HEK293T (cell line): ENCODE measurements at regions of chr16 and their contacts with region 1.

Region 1: DNA sequence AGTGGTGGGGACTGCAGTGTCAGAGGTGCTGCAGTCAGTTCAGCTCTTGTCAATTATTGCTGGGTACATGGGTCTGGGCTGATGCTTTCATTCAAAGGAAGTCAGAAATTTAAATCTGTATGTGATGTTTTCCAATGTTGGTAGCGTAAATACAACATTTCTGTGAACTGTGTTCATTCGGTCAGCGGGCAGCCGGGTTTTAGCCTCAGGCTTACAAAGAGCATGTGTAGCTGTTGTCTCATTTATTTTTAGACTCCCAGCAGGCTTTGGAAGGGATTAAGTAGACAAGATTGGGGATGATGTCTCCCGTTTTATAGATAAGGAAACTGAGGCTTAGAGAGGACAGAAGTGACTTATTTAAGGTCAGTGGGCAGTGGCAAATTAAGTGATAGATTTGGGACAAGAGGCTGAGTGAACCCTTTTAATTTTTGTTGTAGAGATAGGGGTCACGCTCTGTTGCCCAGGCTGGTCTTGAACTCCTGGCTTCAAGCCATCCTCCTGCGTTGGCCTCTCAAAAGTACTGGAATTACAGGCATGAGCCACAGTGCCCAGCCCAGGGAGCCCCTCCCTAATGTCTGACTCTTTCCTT is 8.1 kb downstream of the AQP8 start:
- DNase-seq: no peak

Region 2: GRCh38 chr16:25066747-25067631 is 157.8 kb before region 1 on chr16:
- CTCF ChIA-PET with region 1: no interaction called
- POLR2A ChIA-PET with region 1: no interaction called
- DNase-seq: peak; percentile 93

Region 3: GRCh38 chr16:25126820-25127232 is 98.0 kb before region 1 on chr16:
- CTCF ChIA-PET with region 1: interaction called, 12 read pairs
- POLR2A ChIA-PET with region 1: no interaction called
- DNase-seq: peak; percentile 41

Region 4: DNA sequence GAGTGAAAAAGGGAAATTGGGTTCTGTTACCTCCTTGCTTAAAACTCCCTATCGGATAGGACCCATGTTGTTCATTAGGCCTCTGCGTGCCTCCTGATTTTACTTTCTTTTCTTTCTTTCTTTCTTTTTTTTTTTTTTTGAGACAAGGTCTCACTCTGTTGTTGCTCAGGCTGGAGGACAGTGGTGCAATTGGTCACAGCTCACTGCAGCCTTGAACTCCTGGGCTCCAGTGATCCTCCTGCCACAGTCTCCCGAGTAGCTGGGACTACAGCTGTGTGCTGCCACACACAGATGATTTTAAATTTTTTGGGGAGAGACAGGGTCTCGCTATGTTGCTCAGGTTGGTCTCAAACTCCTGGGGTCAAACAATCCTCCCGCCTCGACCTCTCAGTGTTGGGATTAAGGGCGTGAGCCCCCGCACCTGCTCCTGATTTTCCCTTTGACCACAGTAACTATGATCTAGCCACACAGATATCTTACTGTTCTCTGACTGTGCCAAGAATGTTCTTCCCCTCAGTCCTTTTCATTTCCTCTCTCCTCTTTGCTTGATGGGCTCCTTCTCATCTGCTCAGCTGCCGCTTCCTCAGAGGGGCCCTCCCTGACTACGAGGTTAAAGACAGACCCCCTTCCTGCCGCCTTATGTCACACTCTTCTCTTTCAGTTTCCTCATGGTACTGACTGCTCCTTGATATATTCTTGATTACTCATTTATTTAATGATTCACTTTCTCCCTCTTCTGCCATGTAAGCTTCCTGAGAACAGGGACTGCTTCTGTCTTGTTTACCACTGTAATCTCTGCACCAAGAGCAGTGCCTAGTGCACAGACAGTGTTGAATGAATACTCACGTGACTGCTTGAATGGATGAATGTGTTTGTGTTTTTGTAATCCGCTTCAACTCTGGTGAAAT is 69.0 kb before region 1 on chr16:
- CTCF ChIA-PET with region 1: no interaction called
- POLR2A ChIA-PET with region 1: no interaction called
- DNase-seq: no peak

Region 5: GRCh38 chr16:25235991-25236390 is 11.2 kb after region 1 on chr16:
- CTCF ChIA-PET with region 1: interaction called, 13 read pairs
- POLR2A ChIA-PET with region 1: no interaction called
- DNase-seq: no peak

Region 6: DNA sequence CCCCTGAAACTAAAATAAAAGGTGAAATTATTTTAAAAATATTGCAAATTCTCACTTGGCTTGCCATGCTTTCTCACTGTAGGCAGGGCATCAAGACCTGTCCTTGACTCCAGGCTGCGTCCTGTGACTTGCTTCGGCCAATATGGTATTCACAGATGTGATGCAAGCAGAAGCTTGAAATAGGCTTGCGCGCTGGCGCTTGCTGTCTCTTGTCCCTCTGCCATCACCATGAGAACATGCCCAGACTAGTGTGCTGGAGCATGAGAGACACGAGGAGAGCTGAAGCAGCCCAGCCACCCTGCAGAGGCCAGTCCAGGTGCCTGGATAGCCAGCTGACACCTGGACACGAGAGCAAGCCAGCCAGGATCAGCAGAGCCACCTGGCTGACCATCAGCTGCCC is 54.7 kb after region 1 on chr16:
- CTCF ChIA-PET with region 1: no interaction called
- POLR2A ChIA-PET with region 1: no interaction called
- DNase-seq: no peak